ENCODE measurements at regions of chr5 and their contacts with region 1.

Region 1: GRCh38 chr5:121968910-121969607 is 7.3 kb downstream of the SRFBP1 start:
- DNase-seq: peak in 1 of 2 donors; percentile 31
- ATAC-seq: peak; percentile 80
- H3K4me3 ChIP-seq: no peak overlapping the region
- H3K27ac ChIP-seq: no peak overlapping the region
- H3K4me1 ChIP-seq: peaks cover 0 to 5% of the 10 kb centered on the region in 2 donors
- H3K27me3 ChIP-seq: no peaks in the 10 kb centered on the region

Region 2: GRCh38 chr5:122101636-122102285 is 132.7 kb after region 1 on chr5:
- intact Hi-C with region 1: loop called (anchors 5 kb)
- DNase-seq: no peak
- ATAC-seq: peak; percentile 64
- H3K4me3 ChIP-seq: no peak overlapping the region
- H3K27ac ChIP-seq: no peak overlapping the region
- H3K4me1 ChIP-seq: no peaks in the 10 kb centered on the region
- H3K27me3 ChIP-seq: no peaks in the 10 kb centered on the region

Region 3: GRCh38 chr5:122154910-122155309 is 185.9 kb after region 1 on chr5:
- intact Hi-C with region 1: loop called in 1 of 2 experiments (anchors 2 kb)
- DNase-seq: peak; percentile 77 to 80
- ATAC-seq: peak; percentile 67
- H3K4me3 ChIP-seq: no peak overlapping the region
- H3K27ac ChIP-seq: peak overlapping the region in 1 of 2 donors; percentile 69
- H3K4me1 ChIP-seq: peaks cover 8 to 15% of the 10 kb centered on the region in 2 donors
- H3K27me3 ChIP-seq: no peaks in the 10 kb centered on the region